ENCODE measurements at regions of chr12 and their contacts with region 1.

Region 1: GRCh38 chr12:46382964-46383653 is 10.5 kb upstream of the SLC38A2 start:
- DNase-seq: peak; percentile 70 to 97 (median 93)
- ATAC-seq: peak; percentile 76
- H3K4me3 ChIP-seq: peak overlapping the region; percentile 82 to 93
- H3K4me3 Mint-ChIP-seq: peak overlapping the region; percentile 90
- H3K27ac ChIP-seq: peak overlapping the region; percentile 91 to 93
- H3K27ac Mint-ChIP-seq: peak overlapping the region; percentile 96
- H3K4me1 ChIP-seq: peaks cover 38% of the 10 kb centered on the region
- H3K4me1 Mint-ChIP-seq: peaks cover 36% of the 10 kb centered on the region
- H3K27me3 ChIP-seq: no peaks in the 10 kb centered on the region
- H3K27me3 Mint-ChIP-seq: no peaks in the 10 kb centered on the region
- CTCF ChIP-seq: no peak

Region 2: GRCh38 chr12:46459861-46460545 is 76.9 kb after region 1 on chr12:
- CTCF ChIA-PET with region 1: no interaction called
- POLR2A ChIA-PET with region 1: interaction called, 3 read pairs
- intact Hi-C with region 1: loop called in 1 of 2 experiments (anchors 5 kb)
- DNase-seq: peak in 2 of 9 experiments; percentile 6 to 42
- ATAC-seq: no peak
- H3K4me3 ChIP-seq: peak overlapping the region in 1 of 2 experiments; percentile 16
- H3K4me3 Mint-ChIP-seq: peak overlapping the region; percentile 72
- H3K27ac ChIP-seq: peak overlapping the region in 1 of 2 experiments; percentile 64
- H3K27ac Mint-ChIP-seq: peak overlapping the region; percentile 95
- H3K4me1 ChIP-seq: peaks cover 57% of the 10 kb centered on the region
- H3K4me1 Mint-ChIP-seq: peaks cover 57% of the 10 kb centered on the region
- H3K27me3 ChIP-seq: no peaks in the 10 kb centered on the region
- H3K27me3 Mint-ChIP-seq: no peaks in the 10 kb centered on the region
- CTCF ChIP-seq: no peak

Measured in CD8-positive, alpha-beta T cell (primary cell).